CD8-positive, alpha-beta memory T cell (primary cell): ENCODE measurements at regions of chr10 and their contacts with region 1.

Region 1: GRCh38 chr10:102225646-102226541 is at the start of gene ELOVL3:
- DNase-seq: peak; percentile 80 to 87 (median 81)
- H3K4me3 ChIP-seq: peak within 1 kb of the TSS; percentile 51
- H3K4me3 Mint-ChIP-seq: peak within 1 kb of the TSS; percentile 12 to 82 (median 74)
- H3K27ac ChIP-seq: no peak within 1 kb of the TSS
- H3K27ac Mint-ChIP-seq: peak within 1 kb of the TSS in 3 of 8 donors; percentile 14 to 47 (median 41)
- H3K4me1 ChIP-seq: peaks cover 14% of the 10 kb centered on the region
- H3K4me1 Mint-ChIP-seq: peaks cover 15 to 24% (median 19%) of the 10 kb centered on the region in 3 donors
- H3K27me3 ChIP-seq: peaks cover 30% of the 10 kb centered on the region
- H3K27me3 Mint-ChIP-seq: peaks cover 20 to 51% of the 10 kb centered on the region in 2 donors
- total RNA-seq, gene ELOVL3: not detected

Region 2: DNA sequence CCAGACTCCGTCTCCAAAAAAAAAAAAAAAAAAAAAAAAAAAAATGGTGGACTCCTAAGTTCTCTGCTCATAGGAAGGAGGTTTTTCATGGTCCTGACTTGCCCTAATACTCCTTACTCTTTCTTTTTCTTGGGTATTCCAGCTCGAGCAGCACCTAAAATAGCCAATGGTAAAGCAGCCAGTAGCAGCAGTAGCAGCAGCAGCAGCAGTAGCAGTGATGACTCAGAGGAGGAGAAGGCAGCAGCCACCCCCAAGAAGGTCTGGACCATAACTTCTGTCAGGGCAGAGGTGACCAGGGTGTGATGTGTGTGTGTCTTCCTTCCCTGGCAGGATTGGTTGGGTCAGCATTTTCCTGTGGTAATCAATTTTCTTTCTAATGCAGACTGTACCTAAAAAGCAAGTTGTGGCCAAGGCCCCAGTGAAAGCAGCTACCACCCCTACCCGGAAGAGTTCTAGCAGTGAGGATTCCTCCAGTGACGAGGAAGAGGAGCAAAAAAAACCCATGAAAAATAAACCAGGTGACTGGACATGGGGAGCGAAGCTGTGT is 66.8 kb before region 1 on chr10:
- CTCF ChIA-PET with region 1: no interaction called
- POLR2A ChIA-PET with region 1: no interaction called
- DNase-seq: no peak
- H3K4me3 ChIP-seq: no peak overlapping the region
- H3K4me3 Mint-ChIP-seq: no peak overlapping the region
- H3K27ac ChIP-seq: no peak overlapping the region
- H3K27ac Mint-ChIP-seq: peak overlapping the region in 1 of 8 donors; percentile 54
- H3K4me1 ChIP-seq: peaks cover 5% of the 10 kb centered on the region
- H3K4me1 Mint-ChIP-seq: peaks cover 15 to 32% (median 25%) of the 10 kb centered on the region in 3 donors
- H3K27me3 ChIP-seq: no peaks in the 10 kb centered on the region
- H3K27me3 Mint-ChIP-seq: peaks cover 0 to 1% of the 10 kb centered on the region in 2 donors

Region 3: GRCh38 chr10:102200751-102201640 is 24.9 kb before region 1 on chr10:
- CTCF ChIA-PET with region 1: interaction called, 10 read pairs
- POLR2A ChIA-PET with region 1: no interaction called
- DNase-seq: no peak
- H3K4me3 ChIP-seq: no peak overlapping the region
- H3K4me3 Mint-ChIP-seq: no peak overlapping the region
- H3K27ac ChIP-seq: no peak overlapping the region
- H3K27ac Mint-ChIP-seq: no peak overlapping the region
- H3K4me1 ChIP-seq: no peaks in the 10 kb centered on the region
- H3K4me1 Mint-ChIP-seq: no peaks in the 10 kb centered on the region
- H3K27me3 ChIP-seq: no peaks in the 10 kb centered on the region
- H3K27me3 Mint-ChIP-seq: peaks cover 2 to 26% of the 10 kb centered on the region in 2 donors

Region 4: GRCh38 chr10:102352066-102352715 is 126.3 kb after region 1 on chr10:
- CTCF ChIA-PET with region 1: interaction called, 327 read pairs
- POLR2A ChIA-PET with region 1: interaction called, 7 read pairs
- DNase-seq: peak; percentile 51 to 75 (median 59)
- H3K4me3 ChIP-seq: no peak overlapping the region
- H3K4me3 Mint-ChIP-seq: no peak overlapping the region
- H3K27ac ChIP-seq: no peak overlapping the region
- H3K27ac Mint-ChIP-seq: peak overlapping the region in 3 of 8 donors; percentile 23 to 35 (median 24)
- H3K4me1 ChIP-seq: no peaks in the 10 kb centered on the region
- H3K4me1 Mint-ChIP-seq: peaks cover 0 to 5% (median 0%) of the 10 kb centered on the region in 3 donors
- H3K27me3 ChIP-seq: no peaks in the 10 kb centered on the region
- H3K27me3 Mint-ChIP-seq: no peaks in the 10 kb centered on the region

Region 5: GRCh38 chr10:102384053-102384452 is 158.2 kb after region 1 on chr10:
- CTCF ChIA-PET with region 1: interaction called, 12 read pairs
- POLR2A ChIA-PET with region 1: no interaction called
- DNase-seq: no peak
- H3K4me3 ChIP-seq: no peak overlapping the region
- H3K4me3 Mint-ChIP-seq: no peak overlapping the region
- H3K27ac ChIP-seq: no peak overlapping the region
- H3K27ac Mint-ChIP-seq: peak overlapping the region in 1 of 8 donors; percentile 18
- H3K4me1 ChIP-seq: no peaks in the 10 kb centered on the region
- H3K4me1 Mint-ChIP-seq: no peaks in the 10 kb centered on the region
- H3K27me3 ChIP-seq: no peaks in the 10 kb centered on the region
- H3K27me3 Mint-ChIP-seq: no peaks in the 10 kb centered on the region

Region 6: GRCh38 chr10:102399217-102400089 is 173.6 kb after region 1 on chr10:
- CTCF ChIA-PET with region 1: interaction called, 64 read pairs
- POLR2A ChIA-PET with region 1: interaction called, 12 read pairs
- DNase-seq: peak; percentile 82 to 90 (median 87)
- H3K4me3 ChIP-seq: peak overlapping the region; percentile 28
- H3K4me3 Mint-ChIP-seq: peak overlapping the region; percentile 70 to 97 (median 76)
- H3K27ac ChIP-seq: peak overlapping the region; percentile 61
- H3K27ac Mint-ChIP-seq: peak overlapping the region; percentile 65 to 100 (median 99)
- H3K4me1 ChIP-seq: peaks cover 33% of the 10 kb centered on the region
- H3K4me1 Mint-ChIP-seq: peaks cover 24 to 48% (median 28%) of the 10 kb centered on the region in 3 donors
- H3K27me3 ChIP-seq: no peaks in the 10 kb centered on the region
- H3K27me3 Mint-ChIP-seq: peaks cover 0 to 4% of the 10 kb centered on the region in 2 donors

Region 7: GRCh38 chr10:102583435-102584417 is 357.8 kb after region 1 on chr10:
- CTCF ChIA-PET with region 1: interaction called, 36 read pairs
- POLR2A ChIA-PET with region 1: interaction called, 6 read pairs
- DNase-seq: peak; percentile 64 to 87 (median 66)
- H3K4me3 ChIP-seq: no peak overlapping the region
- H3K4me3 Mint-ChIP-seq: no peak overlapping the region
- H3K27ac ChIP-seq: no peak overlapping the region
- H3K27ac Mint-ChIP-seq: peak overlapping the region in 4 of 8 donors; percentile 50 to 71 (median 58)
- H3K4me1 ChIP-seq: no peaks in the 10 kb centered on the region
- H3K4me1 Mint-ChIP-seq: peaks cover 0 to 12% (median 6%) of the 10 kb centered on the region in 3 donors
- H3K27me3 ChIP-seq: no peaks in the 10 kb centered on the region
- H3K27me3 Mint-ChIP-seq: no peaks in the 10 kb centered on the region